ENCODE measurements at regions of chr1 and their contacts with region 1.

Region 1: GRCh38 chr1:89261926-89262515 is 10.6 kb downstream of the GBP5 start:
- DNase-seq: no peak
- ATAC-seq: no peak
- H3K4me3 Mint-ChIP-seq: peak overlapping the region; percentile 2
- H3K27ac Mint-ChIP-seq: peak overlapping the region; percentile 67
- H3K4me1 Mint-ChIP-seq: peaks cover 78% of the 10 kb centered on the region
- H3K27me3 Mint-ChIP-seq: no peaks in the 10 kb centered on the region
- CTCF ChIP-seq: no peak

Region 2: DNA sequence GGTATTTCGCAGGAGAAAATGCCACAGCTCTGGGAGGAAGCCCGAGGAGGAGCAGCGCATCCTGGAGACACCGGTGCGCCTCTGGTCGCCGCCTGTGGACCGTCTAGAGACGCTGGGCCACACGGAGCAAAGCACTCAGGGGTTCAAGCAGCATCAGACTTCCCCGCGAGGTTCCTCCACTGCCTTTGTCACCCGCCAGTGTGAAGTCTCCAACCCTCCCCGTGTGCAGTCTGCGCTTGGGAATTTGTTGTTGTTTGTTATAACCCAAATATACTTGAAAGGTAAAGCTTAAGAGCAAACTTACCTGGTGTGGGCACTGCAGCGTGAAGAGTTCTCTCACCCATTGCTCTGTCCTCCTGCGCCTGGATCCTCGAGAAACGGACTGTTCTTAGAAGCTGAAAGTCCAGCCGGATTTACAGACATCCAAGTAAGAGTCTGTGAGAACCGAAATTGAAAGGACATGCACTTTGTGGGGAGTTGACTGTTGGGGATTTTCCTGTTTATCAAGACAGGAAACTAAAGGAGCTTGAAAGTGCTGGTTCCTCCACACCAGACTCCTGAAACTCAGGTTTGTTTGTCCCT is 63.4 kb before region 1 on chr1 and contains the start of gene GBP4:
- CTCF ChIA-PET with region 1: interaction called, 4 read pairs
- POLR2A ChIA-PET with region 1: interaction called, 6 read pairs
- intact Hi-C with region 1: loop called (anchors 5 kb)
- DNase-seq: peak; percentile 61
- ATAC-seq: peak; percentile 58
- H3K4me3 Mint-ChIP-seq: peak within 1 kb of the TSS; percentile 92
- H3K27ac Mint-ChIP-seq: peak within 1 kb of the TSS; percentile 97
- H3K4me1 Mint-ChIP-seq: peaks cover 76% of the 10 kb centered on the region
- H3K27me3 Mint-ChIP-seq: no peaks in the 10 kb centered on the region
- CTCF ChIP-seq: no peak
- total RNA-seq, gene GBP4: 34.2 to 38.3 TPM

Region 3: GRCh38 chr1:89391686-89392085 is 129.7 kb after region 1 on chr1:
- CTCF ChIA-PET with region 1: no interaction called
- POLR2A ChIA-PET with region 1: no interaction called
- intact Hi-C with region 1: no loop called
- DNase-seq: no peak
- ATAC-seq: no peak
- H3K4me3 Mint-ChIP-seq: no peak overlapping the region
- H3K27ac Mint-ChIP-seq: no peak overlapping the region
- H3K4me1 Mint-ChIP-seq: no peaks in the 10 kb centered on the region
- H3K27me3 Mint-ChIP-seq: no peaks in the 10 kb centered on the region
- CTCF ChIP-seq: no peak

Measured in activated CD8-positive, alpha-beta T cell treated with anti-CD3 and anti-CD28 coated beads for 36 hours (primary cell).